ENCODE measurements at regions of chr14 and their contacts with region 1.

Region 1: GRCh38 chr14:60656686-60657455 is 7.6 kb upstream of the SIX1 start:
- DNase-seq: peak; percentile 57
- ATAC-seq: peak; percentile 74
- H3K4me3 Mint-ChIP-seq: peak overlapping the region; percentile 82
- H3K27ac Mint-ChIP-seq: peak overlapping the region; percentile 17
- H3K4me1 Mint-ChIP-seq: peaks cover 45% of the 10 kb centered on the region
- H3K27me3 Mint-ChIP-seq: peaks cover 87% of the 10 kb centered on the region

Region 2: GRCh38 chr14:60632777-60633176 is 24.1 kb before region 1 on chr14:
- CTCF ChIA-PET with region 1: interaction called, 11 read pairs
- DNase-seq: peak; percentile 71
- ATAC-seq: peak; percentile 78
- H3K4me3 Mint-ChIP-seq: peak overlapping the region; percentile 25
- H3K27ac Mint-ChIP-seq: peak overlapping the region; percentile 12
- H3K4me1 Mint-ChIP-seq: peaks cover 23% of the 10 kb centered on the region
- H3K27me3 Mint-ChIP-seq: peaks cover 54% of the 10 kb centered on the region

Region 3: GRCh38 chr14:60642270-60643140 is 14.4 kb before region 1 on chr14:
- CTCF ChIA-PET with region 1: interaction called, 13 read pairs
- DNase-seq: no peak
- ATAC-seq: peak; percentile 30
- H3K4me3 Mint-ChIP-seq: no peak overlapping the region
- H3K27ac Mint-ChIP-seq: no peak overlapping the region
- H3K4me1 Mint-ChIP-seq: peaks cover 30% of the 10 kb centered on the region
- H3K27me3 Mint-ChIP-seq: peaks cover 96% of the 10 kb centered on the region

Region 4: DNA sequence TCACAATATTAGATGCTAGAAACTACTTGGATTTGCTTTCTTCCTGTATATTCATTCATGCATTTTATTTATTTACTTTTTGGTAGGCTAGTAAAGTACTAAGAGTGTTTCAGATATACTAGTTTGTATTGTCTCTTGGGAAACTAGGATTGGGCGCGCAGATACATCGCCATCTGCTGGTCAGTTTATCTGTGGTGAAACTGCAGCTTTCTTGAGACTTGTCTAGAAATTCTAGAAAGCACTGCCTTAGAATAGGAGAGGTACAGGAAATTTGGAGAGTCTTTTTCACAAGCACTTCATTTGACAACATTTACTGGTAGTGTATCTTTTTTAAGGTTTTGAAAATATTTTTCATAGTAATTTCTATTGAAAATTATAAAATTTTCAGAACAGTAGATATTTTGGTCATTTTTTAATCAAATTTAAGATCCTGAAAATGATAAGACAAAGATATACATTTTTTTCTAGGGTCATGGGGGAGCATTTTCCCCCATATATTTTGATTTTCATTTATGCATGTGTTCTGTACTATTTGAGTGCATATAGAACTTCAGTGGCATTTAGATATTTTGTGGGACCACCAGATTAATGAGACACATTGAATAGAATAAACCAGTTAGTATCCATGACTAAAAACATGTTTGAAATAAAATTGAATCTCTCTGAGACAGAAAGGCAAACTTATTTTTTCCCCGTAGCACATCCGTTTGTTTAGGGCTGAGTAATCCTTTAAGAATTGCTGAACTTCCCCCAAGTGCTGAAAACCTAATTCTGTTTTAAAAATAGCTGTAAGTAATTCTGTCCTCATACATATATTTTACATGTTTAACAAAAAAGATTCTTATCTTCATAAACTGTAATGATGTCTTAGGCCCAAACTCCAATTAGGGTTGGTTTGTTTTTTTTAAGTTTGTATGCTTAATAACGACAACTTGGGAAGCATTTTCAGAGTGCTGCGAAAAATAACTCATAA is 368.7 kb after region 1 on chr14:
- CTCF ChIA-PET with region 1: interaction called, 18 read pairs
- DNase-seq: peak; percentile 77
- ATAC-seq: peak; percentile 64
- H3K4me3 Mint-ChIP-seq: no peak overlapping the region
- H3K27ac Mint-ChIP-seq: no peak overlapping the region
- H3K4me1 Mint-ChIP-seq: peaks cover 5% of the 10 kb centered on the region
- H3K27me3 Mint-ChIP-seq: no peaks in the 10 kb centered on the region

Measured in activated CD8-positive, alpha-beta memory T cell treated with anti-CD3 and anti-CD28 coated beads, Interleukin-2, amount 10 ng/mL, durations not matched to agents 7 days and 5 days (primary cell).